ENCODE measurements at regions of chr3 and their contacts with region 1.

Region 1: DNA sequence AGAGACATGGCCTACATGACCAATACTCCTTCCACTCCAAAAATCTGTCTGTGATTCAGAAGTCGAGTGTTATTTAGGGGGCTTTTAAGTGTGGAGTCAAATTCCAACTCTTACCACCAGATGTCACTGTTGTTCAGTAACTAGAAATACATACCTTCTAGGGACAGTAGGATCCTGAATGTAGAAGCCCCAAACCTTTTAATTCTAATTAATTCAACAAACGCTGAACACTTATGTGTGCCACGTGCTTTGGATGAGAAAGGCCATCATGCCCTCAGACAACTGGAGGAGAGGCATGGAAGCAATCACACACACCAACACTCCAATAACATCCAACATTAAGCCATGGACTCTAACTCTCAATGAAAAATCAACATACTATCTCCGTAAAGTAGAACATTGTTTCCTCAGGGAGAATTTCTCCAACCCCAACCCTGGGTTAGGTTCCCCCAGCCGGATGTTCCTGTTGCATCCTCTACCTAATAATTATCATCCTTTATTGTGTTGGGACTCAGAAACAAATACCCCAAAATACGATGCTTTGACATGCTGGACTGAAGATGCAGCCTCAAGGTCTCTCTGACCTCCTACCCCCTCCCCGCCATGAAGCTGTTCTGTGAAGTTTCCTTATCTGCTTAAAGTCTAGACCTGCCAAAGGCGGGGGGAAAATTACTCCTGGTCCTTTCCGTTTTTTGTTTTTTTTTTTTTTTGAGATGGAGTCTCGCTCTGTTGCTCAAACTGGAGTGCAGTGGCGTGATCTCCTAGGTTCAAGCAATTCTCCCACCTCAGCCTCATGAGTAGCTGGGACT is 8.0 kb upstream of the CCDC13 start:
- DNase-seq: peak in 1 of 2 donors; percentile 87
- ATAC-seq: peak; percentile 80 to 98 (median 87)
- H3K4me3 ChIP-seq: no peak overlapping the region
- H3K4me3 Mint-ChIP-seq: no peak overlapping the region
- H3K27ac ChIP-seq: no peak overlapping the region
- H3K27ac Mint-ChIP-seq: no peak overlapping the region
- H3K4me1 ChIP-seq: no peaks in the 10 kb centered on the region
- H3K4me1 Mint-ChIP-seq: peaks cover 0 to 3% of the 10 kb centered on the region in 2 donors
- H3K27me3 ChIP-seq: no peaks in the 10 kb centered on the region
- H3K27me3 Mint-ChIP-seq: no peaks in the 10 kb centered on the region
- CTCF ChIP-seq: peak; percentile 74

Region 2: DNA sequence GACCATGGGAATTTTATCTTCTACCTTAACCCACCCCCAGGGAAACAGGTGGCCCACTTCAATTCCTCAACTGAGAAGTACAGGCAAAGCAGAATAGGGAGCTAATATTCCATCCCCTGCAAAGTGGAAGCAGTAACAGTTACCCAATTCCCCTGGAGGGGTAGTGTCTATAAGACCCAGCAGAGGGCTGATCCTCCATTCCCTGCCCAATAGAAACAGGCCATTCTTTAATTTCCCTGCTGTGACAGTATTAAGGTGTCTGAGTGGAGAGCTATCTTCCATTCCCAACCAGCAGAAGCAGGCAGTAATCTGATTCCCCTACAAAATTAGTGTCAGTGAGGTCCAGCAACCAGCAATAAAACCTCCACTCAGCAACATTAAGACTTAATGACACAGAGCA is 1039.0 kb before region 1 on chr3:
- intact Hi-C with region 1: no loop called
- DNase-seq: no peak
- ATAC-seq: no peak
- H3K4me3 ChIP-seq: no peak overlapping the region
- H3K4me3 Mint-ChIP-seq: no peak overlapping the region
- H3K27ac ChIP-seq: no peak overlapping the region
- H3K27ac Mint-ChIP-seq: no peak overlapping the region
- H3K4me1 ChIP-seq: no peaks in the 10 kb centered on the region
- H3K4me1 Mint-ChIP-seq: no peaks in the 10 kb centered on the region
- H3K27me3 ChIP-seq: no peaks in the 10 kb centered on the region
- H3K27me3 Mint-ChIP-seq: no peaks in the 10 kb centered on the region
- CTCF ChIP-seq: no peak

Region 3: GRCh38 chr3:42468111-42468510 is 313.0 kb before region 1 on chr3:
- intact Hi-C with region 1: no loop called
- DNase-seq: no peak
- ATAC-seq: no peak
- H3K4me3 ChIP-seq: no peak overlapping the region
- H3K4me3 Mint-ChIP-seq: no peak overlapping the region
- H3K27ac ChIP-seq: no peak overlapping the region
- H3K27ac Mint-ChIP-seq: no peak overlapping the region
- H3K4me1 ChIP-seq: no peaks in the 10 kb centered on the region
- H3K4me1 Mint-ChIP-seq: no peaks in the 10 kb centered on the region
- H3K27me3 ChIP-seq: no peaks in the 10 kb centered on the region
- H3K27me3 Mint-ChIP-seq: peaks cover 0 to 7% of the 10 kb centered on the region in 2 donors
- CTCF ChIP-seq: no peak

Region 4: GRCh38 chr3:42711491-42712343 is 69.4 kb before region 1 on chr3:
- intact Hi-C with region 1: no loop called
- DNase-seq: peak in 1 of 2 donors; percentile 9
- ATAC-seq: no peak
- H3K4me3 ChIP-seq: no peak overlapping the region
- H3K4me3 Mint-ChIP-seq: no peak overlapping the region
- H3K27ac ChIP-seq: no peak overlapping the region
- H3K27ac Mint-ChIP-seq: no peak overlapping the region
- H3K4me1 ChIP-seq: no peaks in the 10 kb centered on the region
- H3K4me1 Mint-ChIP-seq: no peaks in the 10 kb centered on the region
- H3K27me3 ChIP-seq: no peaks in the 10 kb centered on the region
- H3K27me3 Mint-ChIP-seq: peaks cover 5% of the 10 kb centered on the region in 2 donors
- CTCF ChIP-seq: no peak

Region 5: GRCh38 chr3:42804106-42804830 is 23.2 kb after region 1 on chr3 and contains the start of gene HIGD1A:
- intact Hi-C with region 1: loop called (anchors 2 kb)
- DNase-seq: peak; percentile 88 to 96
- ATAC-seq: peak; percentile 97 to 100 (median 99)
- H3K4me3 ChIP-seq: peak within 1 kb of the TSS; percentile 98
- H3K4me3 Mint-ChIP-seq: peak within 1 kb of the TSS; percentile 91
- H3K27ac ChIP-seq: peak within 1 kb of the TSS; percentile 89
- H3K27ac Mint-ChIP-seq: peak within 1 kb of the TSS; percentile 83 to 97
- H3K4me1 ChIP-seq: peaks cover 18% of the 10 kb centered on the region
- H3K4me1 Mint-ChIP-seq: peaks cover 38 to 46% of the 10 kb centered on the region in 2 donors
- H3K27me3 ChIP-seq: no peaks in the 10 kb centered on the region
- H3K27me3 Mint-ChIP-seq: peaks cover 13 to 26% of the 10 kb centered on the region in 2 donors
- CTCF ChIP-seq: no peak
- total RNA-seq, gene HIGD1A: 24.5 to 28.5 (median 28.2) TPM

Region 6: DNA sequence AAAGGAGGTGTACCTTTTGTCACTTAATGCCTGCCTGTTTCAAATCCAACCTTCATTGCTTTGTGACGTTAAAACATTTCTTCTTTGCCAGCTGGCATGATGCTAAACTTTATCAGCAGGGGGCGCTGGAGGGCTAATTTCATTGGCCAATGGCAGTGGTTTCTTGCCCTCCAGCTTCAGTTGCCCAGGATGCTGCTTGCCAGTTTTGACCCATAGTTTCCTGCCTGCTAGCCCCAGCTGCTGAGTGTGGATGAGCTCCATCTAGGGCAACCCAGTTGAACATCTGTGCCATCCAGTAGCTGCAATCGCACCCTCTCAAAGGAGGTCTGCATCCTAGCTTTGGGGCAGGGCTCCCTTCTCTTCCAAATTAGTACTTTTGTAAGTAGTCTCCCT is 50.2 kb after region 1 on chr3:
- intact Hi-C with region 1: loop called (anchors 2 kb)
- DNase-seq: peak; percentile 69 to 82
- ATAC-seq: peak; percentile 68 to 89 (median 85)
- H3K4me3 ChIP-seq: no peak overlapping the region
- H3K4me3 Mint-ChIP-seq: no peak overlapping the region
- H3K27ac ChIP-seq: no peak overlapping the region
- H3K27ac Mint-ChIP-seq: peak overlapping the region in 1 of 2 donors; percentile 16
- H3K4me1 ChIP-seq: peaks cover 3% of the 10 kb centered on the region
- H3K4me1 Mint-ChIP-seq: peaks cover 8 to 13% of the 10 kb centered on the region in 2 donors
- H3K27me3 ChIP-seq: peaks cover 2% of the 10 kb centered on the region
- H3K27me3 Mint-ChIP-seq: peaks cover 11 to 14% of the 10 kb centered on the region in 2 donors
- CTCF ChIP-seq: peak; percentile 89

Region 7: DNA sequence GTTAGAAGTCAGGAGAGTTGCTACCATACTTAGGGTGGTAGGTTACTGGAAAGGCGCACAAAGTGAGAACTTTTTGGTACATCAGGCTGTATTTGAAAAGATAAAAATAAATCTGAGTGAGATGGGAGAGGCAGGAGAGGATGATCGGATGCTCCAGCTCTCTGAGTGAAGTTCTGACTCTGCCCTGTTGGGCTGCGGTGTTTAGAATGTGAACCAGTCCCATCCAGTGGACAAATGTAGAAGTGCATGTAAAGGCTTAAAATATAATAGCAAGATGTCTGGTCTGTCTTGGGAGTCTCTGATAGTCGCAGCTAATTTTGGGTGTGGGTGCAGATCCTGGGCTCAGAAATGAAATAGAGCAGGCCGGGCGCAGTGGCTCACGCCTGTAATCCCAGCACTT is 58.5 kb after region 1 on chr3:
- intact Hi-C with region 1: loop called (anchors 1 kb)
- DNase-seq: peak in 1 of 2 donors; percentile 72
- ATAC-seq: peak; percentile 80 to 100 (median 99)
- H3K4me3 ChIP-seq: no peak overlapping the region
- H3K4me3 Mint-ChIP-seq: no peak overlapping the region
- H3K27ac ChIP-seq: no peak overlapping the region
- H3K27ac Mint-ChIP-seq: no peak overlapping the region
- H3K4me1 ChIP-seq: no peaks in the 10 kb centered on the region
- H3K4me1 Mint-ChIP-seq: peaks cover 0 to 7% of the 10 kb centered on the region in 2 donors
- H3K27me3 ChIP-seq: no peaks in the 10 kb centered on the region
- H3K27me3 Mint-ChIP-seq: peaks cover 0 to 3% of the 10 kb centered on the region in 2 donors
- CTCF ChIP-seq: peak; percentile 65

Region 8: GRCh38 chr3:42880601-42881451 is 99.7 kb after region 1 on chr3:
- intact Hi-C with region 1: loop called (anchors 1 kb)
- DNase-seq: peak; percentile 71 to 95
- ATAC-seq: peak; percentile 96 to 98 (median 98)
- H3K4me3 ChIP-seq: peak overlapping the region; percentile 40
- H3K4me3 Mint-ChIP-seq: peak overlapping the region; percentile 86
- H3K27ac ChIP-seq: peak overlapping the region; percentile 1
- H3K27ac Mint-ChIP-seq: peak overlapping the region; percentile 76 to 89
- H3K4me1 ChIP-seq: peaks cover 14% of the 10 kb centered on the region
- H3K4me1 Mint-ChIP-seq: peaks cover 7 to 17% of the 10 kb centered on the region in 2 donors
- H3K27me3 ChIP-seq: no peaks in the 10 kb centered on the region
- H3K27me3 Mint-ChIP-seq: no peaks in the 10 kb centered on the region
- CTCF ChIP-seq: peak; percentile 92